ENCODE measurements at regions of chr7 and their contacts with region 1.

Region 1: GRCh38 chr7:141654551-141654950 is 47.4 kb downstream of the DENND11 start:
- DNase-seq: peak; percentile 62 to 71 (median 67)
- H3K4me3 ChIP-seq: no peak overlapping the region
- H3K4me3 Mint-ChIP-seq: no peak overlapping the region
- H3K27ac ChIP-seq: no peak overlapping the region
- H3K27ac Mint-ChIP-seq: peak overlapping the region in 6 of 7 donors; percentile 1 to 92 (median 76)
- H3K4me1 ChIP-seq: no peaks in the 10 kb centered on the region
- H3K4me1 Mint-ChIP-seq: peaks cover 4 to 7% (median 5%) of the 10 kb centered on the region in 4 donors
- H3K27me3 ChIP-seq: no peaks in the 10 kb centered on the region
- H3K27me3 Mint-ChIP-seq: no peaks in the 10 kb centered on the region

Region 2: DNA sequence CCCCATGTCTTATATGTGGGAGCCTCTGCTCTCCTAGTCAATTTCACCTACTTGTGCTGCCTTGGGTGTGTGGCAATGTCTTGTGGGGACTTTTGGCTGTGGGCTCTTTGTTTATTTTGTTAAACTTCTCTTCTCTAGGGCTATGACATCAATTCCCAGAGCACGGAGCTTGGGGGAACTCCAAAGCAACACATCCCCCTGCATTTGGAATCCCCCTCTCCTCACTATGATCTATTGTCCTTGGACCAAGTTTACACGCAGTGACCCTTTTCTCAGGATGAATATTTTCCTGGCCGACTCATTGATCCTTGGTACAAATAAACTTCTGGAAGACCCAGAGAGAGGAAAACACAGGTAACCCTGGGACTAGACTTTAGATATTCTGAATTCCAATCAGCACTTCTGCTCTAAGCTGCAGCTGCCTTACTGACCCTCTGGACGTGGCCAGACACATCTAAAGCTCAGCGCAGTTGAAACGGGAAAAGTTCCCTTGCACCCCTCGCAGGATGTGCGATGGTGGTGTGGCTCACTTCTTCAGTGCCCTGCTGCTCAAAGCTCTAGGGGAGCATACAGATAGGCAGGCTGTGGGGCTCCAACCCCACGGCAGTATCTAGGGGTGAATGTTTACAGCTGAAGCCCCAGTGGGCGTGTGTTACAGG is 469.9 kb before region 1 on chr7:
- CTCF ChIA-PET with region 1: no interaction called
- POLR2A ChIA-PET with region 1: no interaction called
- intact Hi-C with region 1: no loop called
- DNase-seq: no peak
- H3K4me3 ChIP-seq: no peak overlapping the region
- H3K4me3 Mint-ChIP-seq: no peak overlapping the region
- H3K27ac ChIP-seq: no peak overlapping the region
- H3K27ac Mint-ChIP-seq: no peak overlapping the region
- H3K4me1 ChIP-seq: no peaks in the 10 kb centered on the region
- H3K4me1 Mint-ChIP-seq: no peaks in the 10 kb centered on the region
- H3K27me3 ChIP-seq: no peaks in the 10 kb centered on the region
- H3K27me3 Mint-ChIP-seq: peaks cover 2 to 3% of the 10 kb centered on the region in 2 donors

Region 3: DNA sequence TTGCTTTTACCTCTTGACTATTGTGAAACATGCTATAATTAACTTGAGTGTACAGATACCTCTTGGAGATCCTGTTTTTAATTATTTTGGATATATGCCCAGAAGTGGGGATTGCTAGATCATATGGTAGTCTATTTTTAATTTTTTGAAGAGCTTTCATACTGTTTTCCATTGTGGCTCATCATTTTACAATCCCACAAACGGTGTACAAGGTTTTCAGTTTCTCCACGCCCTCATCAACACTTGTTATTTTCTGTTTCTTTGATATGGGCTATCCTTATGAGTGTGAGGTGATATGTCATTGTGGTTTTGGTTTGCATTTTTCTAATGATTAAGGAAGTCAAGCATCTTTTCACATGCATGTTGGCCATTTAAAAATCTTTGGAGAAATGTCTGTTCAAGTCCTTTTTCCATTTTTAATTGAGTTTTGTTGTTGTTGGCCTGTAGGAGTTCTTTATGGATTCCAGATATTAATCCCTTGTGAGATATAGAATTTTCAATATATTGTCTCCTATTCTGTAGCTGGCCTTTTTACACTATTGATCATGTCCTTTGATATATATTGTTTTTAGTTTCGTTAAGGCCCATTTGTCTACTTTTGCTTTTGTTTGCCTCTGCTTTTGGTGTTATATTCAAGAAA is 95.9 kb before region 1 on chr7:
- CTCF ChIA-PET with region 1: no interaction called
- POLR2A ChIA-PET with region 1: no interaction called
- intact Hi-C with region 1: no loop called
- DNase-seq: peak; percentile 46 to 65 (median 54)
- H3K4me3 ChIP-seq: no peak overlapping the region
- H3K4me3 Mint-ChIP-seq: peak overlapping the region in 7 of 8 donors; percentile 30 to 64 (median 57)
- H3K27ac ChIP-seq: peak overlapping the region; percentile 3
- H3K27ac Mint-ChIP-seq: peak overlapping the region; percentile 82 to 95 (median 86)
- H3K4me1 ChIP-seq: peaks cover 21% of the 10 kb centered on the region
- H3K4me1 Mint-ChIP-seq: peaks cover 19 to 50% (median 47%) of the 10 kb centered on the region in 4 donors
- H3K27me3 ChIP-seq: no peaks in the 10 kb centered on the region
- H3K27me3 Mint-ChIP-seq: no peaks in the 10 kb centered on the region

Region 4: DNA sequence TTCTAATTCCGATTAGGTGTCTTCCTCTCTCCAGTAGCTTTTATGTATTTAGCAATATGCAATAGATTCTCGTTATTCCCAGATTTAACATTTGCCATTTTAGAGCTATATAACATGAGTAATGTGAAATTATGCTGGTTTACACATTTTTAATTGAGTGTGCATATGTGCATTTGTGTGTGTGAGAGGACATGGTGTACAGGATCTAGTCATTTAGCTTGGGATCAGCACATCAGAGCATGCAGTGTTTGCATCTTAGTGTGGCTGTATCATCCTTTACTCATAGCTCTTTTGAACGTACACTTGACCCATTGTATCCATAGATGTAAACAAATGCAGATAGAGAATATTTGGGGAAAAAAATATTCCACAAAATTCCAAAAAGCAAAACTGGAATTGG is 18.5 kb before region 1 on chr7:
- CTCF ChIA-PET with region 1: interaction called, 17 read pairs
- POLR2A ChIA-PET with region 1: no interaction called
- intact Hi-C with region 1: no loop called
- DNase-seq: no peak
- H3K4me3 ChIP-seq: no peak overlapping the region
- H3K4me3 Mint-ChIP-seq: no peak overlapping the region
- H3K27ac ChIP-seq: no peak overlapping the region
- H3K27ac Mint-ChIP-seq: no peak overlapping the region
- H3K4me1 ChIP-seq: no peaks in the 10 kb centered on the region
- H3K4me1 Mint-ChIP-seq: peaks cover 0 to 3% (median 0%) of the 10 kb centered on the region in 4 donors
- H3K27me3 ChIP-seq: no peaks in the 10 kb centered on the region
- H3K27me3 Mint-ChIP-seq: no peaks in the 10 kb centered on the region

Region 5: GRCh38 chr7:141641876-141642275 is 12.7 kb before region 1 on chr7:
- CTCF ChIA-PET with region 1: interaction called, 17 read pairs
- POLR2A ChIA-PET with region 1: no interaction called
- intact Hi-C with region 1: no loop called
- DNase-seq: no peak
- H3K4me3 ChIP-seq: no peak overlapping the region
- H3K4me3 Mint-ChIP-seq: no peak overlapping the region
- H3K27ac ChIP-seq: no peak overlapping the region
- H3K27ac Mint-ChIP-seq: no peak overlapping the region
- H3K4me1 ChIP-seq: no peaks in the 10 kb centered on the region
- H3K4me1 Mint-ChIP-seq: no peaks in the 10 kb centered on the region
- H3K27me3 ChIP-seq: no peaks in the 10 kb centered on the region
- H3K27me3 Mint-ChIP-seq: no peaks in the 10 kb centered on the region

Region 6: GRCh38 chr7:141701489-141702046 is 47.0 kb after region 1 on chr7:
- CTCF ChIA-PET with region 1: interaction called, 16 read pairs
- POLR2A ChIA-PET with region 1: interaction called, 3 read pairs
- intact Hi-C with region 1: no loop called
- DNase-seq: peak; percentile 77 to 88 (median 79)
- H3K4me3 ChIP-seq: peak overlapping the region in 1 of 2 donors; percentile 57
- H3K4me3 Mint-ChIP-seq: peak overlapping the region; percentile 87 to 94 (median 90)
- H3K27ac ChIP-seq: peak overlapping the region; percentile 74
- H3K27ac Mint-ChIP-seq: peak overlapping the region; percentile 87 to 95 (median 93)
- H3K4me1 ChIP-seq: peaks cover 44% of the 10 kb centered on the region
- H3K4me1 Mint-ChIP-seq: peaks cover 36 to 65% (median 47%) of the 10 kb centered on the region in 4 donors
- H3K27me3 ChIP-seq: no peaks in the 10 kb centered on the region
- H3K27me3 Mint-ChIP-seq: peaks cover 0 to 2% of the 10 kb centered on the region in 2 donors

Region 7: GRCh38 chr7:141710301-141710700 is 55.8 kb after region 1 on chr7:
- CTCF ChIA-PET with region 1: interaction called, 24 read pairs
- POLR2A ChIA-PET with region 1: no interaction called
- intact Hi-C with region 1: no loop called
- DNase-seq: no peak
- H3K4me3 ChIP-seq: no peak overlapping the region
- H3K4me3 Mint-ChIP-seq: no peak overlapping the region
- H3K27ac ChIP-seq: no peak overlapping the region
- H3K27ac Mint-ChIP-seq: no peak overlapping the region
- H3K4me1 ChIP-seq: no peaks in the 10 kb centered on the region
- H3K4me1 Mint-ChIP-seq: peaks cover 0 to 2% (median under 1%) of the 10 kb centered on the region in 4 donors
- H3K27me3 ChIP-seq: no peaks in the 10 kb centered on the region
- H3K27me3 Mint-ChIP-seq: no peaks in the 10 kb centered on the region

Region 8: DNA sequence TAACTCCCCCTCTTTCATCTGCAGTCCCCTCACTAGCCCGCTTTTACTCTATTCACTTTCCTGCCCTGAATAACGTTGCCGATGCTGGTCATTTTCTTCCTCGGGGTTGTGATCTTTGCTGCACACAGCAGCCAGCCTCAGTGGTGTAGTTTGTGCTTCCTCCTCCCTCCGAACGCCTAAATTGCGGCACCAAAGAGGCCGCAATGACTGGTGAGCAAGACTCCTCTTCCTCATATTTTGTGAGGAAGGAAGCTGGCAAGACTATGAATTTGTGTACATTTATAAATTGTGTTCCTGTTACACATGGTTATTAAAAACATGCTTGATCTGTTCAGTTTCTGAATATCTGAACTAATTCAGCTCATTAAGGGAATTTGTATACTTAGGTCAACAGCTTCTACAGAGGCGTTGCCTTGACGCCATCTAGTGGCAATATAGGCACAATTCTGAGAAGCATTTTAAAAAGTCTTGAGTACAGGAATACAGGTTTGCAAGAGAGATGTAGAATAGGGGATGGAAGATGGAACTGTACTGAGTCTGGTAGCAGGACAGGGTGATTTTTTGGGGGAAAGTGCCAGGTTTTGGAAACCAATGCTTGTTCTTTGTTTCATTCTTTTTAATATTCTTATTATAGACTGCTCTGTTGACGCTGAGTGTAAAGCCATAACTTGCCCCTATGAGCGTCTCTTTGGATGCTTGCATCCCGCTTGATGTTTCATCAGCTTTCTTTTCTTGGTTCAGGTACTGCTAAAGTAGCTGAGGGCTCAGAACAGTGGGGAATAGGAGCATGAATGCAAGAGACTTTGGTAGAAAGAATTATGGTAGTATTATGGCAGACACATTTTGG is 131.4 kb after region 1 on chr7:
- CTCF ChIA-PET with region 1: interaction called, 41 read pairs
- POLR2A ChIA-PET with region 1: interaction called, 3 read pairs
- intact Hi-C with region 1: no loop called
- DNase-seq: peak in 4 of 5 donors; percentile 27 to 41 (median 37)
- H3K4me3 ChIP-seq: no peak overlapping the region
- H3K4me3 Mint-ChIP-seq: no peak overlapping the region
- H3K27ac ChIP-seq: no peak overlapping the region
- H3K27ac Mint-ChIP-seq: no peak overlapping the region
- H3K4me1 ChIP-seq: no peaks in the 10 kb centered on the region
- H3K4me1 Mint-ChIP-seq: peaks cover 0 to 2% (median 0%) of the 10 kb centered on the region in 4 donors
- H3K27me3 ChIP-seq: no peaks in the 10 kb centered on the region
- H3K27me3 Mint-ChIP-seq: no peaks in the 10 kb centered on the region